Adrenal gland (tissue), 19 donors: ENCODE measurements at regions of chr7 and their contacts with region 1.

Region 1: DNA sequence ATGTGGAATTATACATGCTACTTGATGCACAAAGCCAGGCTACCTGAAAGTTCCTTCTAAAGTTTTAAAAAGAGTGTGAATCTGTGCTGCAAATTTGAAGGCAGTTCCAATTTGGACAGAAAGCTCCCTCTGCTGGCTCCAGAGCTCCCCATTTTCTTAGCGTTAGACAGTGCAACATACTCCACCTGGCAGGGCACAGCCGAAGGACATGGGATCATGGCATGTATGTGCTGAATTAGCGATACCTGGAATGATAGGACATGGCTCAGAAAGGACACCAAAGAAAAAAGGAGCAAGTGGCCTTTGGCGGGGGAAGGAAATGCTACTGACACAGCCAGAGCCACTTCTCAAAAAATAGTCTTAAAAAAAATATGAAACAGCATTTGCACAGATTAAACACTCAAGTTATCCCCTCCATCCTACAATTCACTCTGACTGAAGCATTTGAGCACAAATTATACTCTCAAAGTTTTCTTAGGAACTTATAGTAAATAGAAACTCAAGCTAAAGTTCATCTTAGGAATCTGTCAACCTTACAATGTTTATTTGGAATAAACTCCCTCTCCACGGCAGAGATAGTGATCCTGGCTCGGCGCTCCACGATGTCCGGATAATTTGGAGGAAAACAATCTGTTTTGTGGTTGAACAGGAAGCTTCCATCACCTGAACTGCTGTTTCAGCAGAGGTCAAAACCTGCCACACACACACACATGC is 80.0 kb downstream of the C7orf25 start:
- DNase-seq: peak; percentile 27 to 69 (median 54)
- H3K4me3 ChIP-seq: peak overlapping the region in 1 of 4 donors; percentile 17
- H3K27ac ChIP-seq: no peak overlapping the region
- H3K4me1 ChIP-seq: peaks cover 0 to 4% of the 10 kb centered on the region in 2 donors
- H3K27me3 ChIP-seq: no peaks in the 10 kb centered on the region
- CTCF ChIP-seq: peak; percentile 36 to 72 (median 58)
- POLR2A ChIP-seq: no peak

Region 2: GRCh38 chr7:41977151-41977651 is 854.7 kb before region 1 on chr7:
- intact Hi-C with region 1: loop called in 1 of 2 experiments (anchors 10 kb)
- DNase-seq: peak in 4 of 7 donors; percentile 30 to 63 (median 37)
- H3K4me3 ChIP-seq: no peak overlapping the region
- H3K27ac ChIP-seq: no peak overlapping the region
- H3K4me1 ChIP-seq: no peaks in the 10 kb centered on the region
- H3K27me3 ChIP-seq: no peaks in the 10 kb centered on the region
- CTCF ChIP-seq: peak; percentile 48 to 73 (median 56)
- POLR2A ChIP-seq: no peak

Region 3: DNA sequence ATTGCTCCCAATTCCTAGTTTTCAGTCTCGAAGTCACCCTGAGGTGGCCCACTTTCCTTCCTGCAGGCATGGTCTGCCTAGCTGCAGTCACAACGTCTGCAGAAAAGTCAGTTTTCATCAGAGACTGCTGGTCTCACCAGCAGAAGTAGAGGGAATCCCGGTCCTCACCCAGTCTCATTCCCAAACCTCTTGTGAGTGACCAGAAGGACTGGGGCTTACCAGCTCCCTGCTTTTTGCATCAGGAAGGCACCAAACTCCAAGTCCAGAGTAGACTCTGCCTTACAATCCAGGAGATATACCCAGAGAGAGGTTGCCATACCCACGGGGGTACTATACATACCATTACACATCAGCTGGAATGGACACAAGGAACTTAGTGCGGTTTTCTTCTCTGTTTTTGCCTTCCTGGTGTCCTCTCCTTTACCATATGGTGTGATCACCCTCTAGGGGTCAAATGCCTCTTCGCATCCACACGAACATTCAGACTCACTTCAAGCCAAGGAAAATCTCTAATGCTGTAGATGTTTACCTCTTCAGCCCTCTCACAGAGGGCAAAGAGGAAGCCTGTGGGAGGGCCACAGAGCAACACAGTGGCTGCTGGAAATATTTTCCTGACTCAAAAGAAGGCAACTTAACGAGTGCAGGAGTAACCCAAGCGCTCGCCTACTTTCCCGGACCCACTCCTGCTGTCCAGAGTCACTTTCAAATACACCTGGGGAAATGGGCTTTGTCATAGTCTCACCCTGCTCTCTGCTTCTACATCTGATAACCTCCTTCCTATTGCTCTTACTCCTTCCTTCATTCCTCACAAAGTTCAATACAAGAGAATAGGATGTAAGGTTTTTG is 140.9 kb before region 1 on chr7:
- intact Hi-C with region 1: loop called in 1 of 2 experiments (anchors 10 kb)
- DNase-seq: peak in 5 of 7 donors; percentile 19 to 44 (median 33)
- H3K4me3 ChIP-seq: no peak overlapping the region
- H3K27ac ChIP-seq: no peak overlapping the region
- H3K4me1 ChIP-seq: no peaks in the 10 kb centered on the region
- H3K27me3 ChIP-seq: no peaks in the 10 kb centered on the region
- CTCF ChIP-seq: peak; percentile 13 to 49 (median 46)
- POLR2A ChIP-seq: no peak

Region 4: GRCh38 chr7:42745357-42746059 is 86.4 kb before region 1 on chr7:
- intact Hi-C with region 1: no loop called
- DNase-seq: peak in 4 of 7 donors; percentile 27 to 60 (median 42)
- H3K4me3 ChIP-seq: no peak overlapping the region
- H3K27ac ChIP-seq: no peak overlapping the region
- H3K4me1 ChIP-seq: peaks cover 0 to 2% of the 10 kb centered on the region in 2 donors
- H3K27me3 ChIP-seq: no peaks in the 10 kb centered on the region
- CTCF ChIP-seq: peak in 4 of 6 experiments; percentile 15 to 46 (median 28)
- POLR2A ChIP-seq: no peak

Region 5: DNA sequence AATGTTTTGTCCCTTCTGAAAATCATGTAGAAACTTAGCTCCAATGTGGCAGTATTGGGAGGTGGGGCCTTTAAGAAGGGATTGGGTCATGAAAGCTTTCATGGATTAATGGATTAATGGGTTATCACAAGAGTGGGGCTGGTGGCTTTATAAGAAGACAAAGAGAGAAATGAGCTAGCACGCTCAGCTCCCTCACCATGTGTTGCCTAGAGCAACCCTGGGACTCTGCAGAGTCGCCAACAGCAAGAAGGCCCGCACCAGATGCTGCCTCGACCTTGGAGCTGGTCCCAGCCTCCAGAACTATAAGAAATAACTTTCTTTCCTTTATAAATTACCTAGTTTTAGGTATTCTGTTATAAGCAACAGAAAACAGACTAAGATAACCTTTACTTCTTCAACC is 205.7 kb after region 1 on chr7:
- intact Hi-C with region 1: no loop called
- DNase-seq: no peak
- H3K4me3 ChIP-seq: no peak overlapping the region
- H3K27ac ChIP-seq: no peak overlapping the region
- H3K4me1 ChIP-seq: no peaks in the 10 kb centered on the region
- H3K27me3 ChIP-seq: no peaks in the 10 kb centered on the region
- CTCF ChIP-seq: no peak
- POLR2A ChIP-seq: no peak